ENCODE measurements at regions of chr14 and their contacts with region 1.

Region 1: DNA sequence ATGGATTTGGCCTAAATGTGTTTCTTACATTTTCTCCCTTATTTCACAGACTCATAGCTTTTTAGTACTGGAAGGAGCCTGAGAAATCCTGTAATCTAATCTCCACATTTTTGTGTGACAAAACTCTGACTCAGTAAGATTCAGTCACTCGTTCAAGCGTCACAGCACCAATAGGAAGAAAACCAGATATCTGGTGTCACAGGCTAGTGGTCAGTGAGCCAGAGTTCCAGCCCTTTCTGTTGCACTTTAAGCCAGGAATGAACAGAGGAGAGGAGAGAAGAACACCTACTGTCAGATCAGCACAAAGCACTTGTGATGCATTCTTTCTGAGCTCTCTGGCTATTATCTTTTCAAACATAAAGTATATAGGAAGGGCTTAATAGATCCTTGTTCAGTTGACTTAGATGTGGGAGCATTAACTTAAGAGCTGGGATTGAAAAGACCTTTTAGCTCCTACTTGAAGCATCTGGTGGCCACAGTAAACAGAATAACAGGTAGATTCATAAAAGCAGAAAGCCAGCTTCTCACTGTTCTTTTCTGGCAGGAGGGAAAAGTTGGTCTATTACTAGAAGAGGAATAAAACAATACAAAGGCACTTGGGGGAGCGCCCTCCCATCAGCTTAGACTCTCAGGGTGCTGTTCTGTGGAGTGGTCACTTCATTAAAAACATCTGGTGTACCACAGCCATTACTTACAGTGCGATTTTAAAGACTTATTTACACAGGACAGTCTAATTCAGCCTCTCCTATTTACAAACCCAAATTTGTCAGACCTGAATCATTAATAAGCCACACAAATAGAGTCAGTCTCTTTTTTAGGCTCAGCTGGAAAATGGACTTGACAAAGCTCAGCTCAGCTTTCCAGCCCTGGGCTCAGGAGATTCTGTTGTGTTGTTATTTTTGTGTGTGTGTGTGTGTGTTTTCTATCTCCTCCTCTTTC is 12.2 kb upstream of the NID2 start:
- DNase-seq: peak; percentile 96
- ATAC-seq: peak; percentile 70
- H3K4me3 ChIP-seq: peak overlapping the region; percentile 51
- H3K27ac ChIP-seq: peak overlapping the region; percentile 97
- H3K4me1 ChIP-seq: peaks cover 61% of the 10 kb centered on the region
- H3K27me3 ChIP-seq: no peaks in the 10 kb centered on the region
- CTCF ChIP-seq: no peak

Region 2: DNA sequence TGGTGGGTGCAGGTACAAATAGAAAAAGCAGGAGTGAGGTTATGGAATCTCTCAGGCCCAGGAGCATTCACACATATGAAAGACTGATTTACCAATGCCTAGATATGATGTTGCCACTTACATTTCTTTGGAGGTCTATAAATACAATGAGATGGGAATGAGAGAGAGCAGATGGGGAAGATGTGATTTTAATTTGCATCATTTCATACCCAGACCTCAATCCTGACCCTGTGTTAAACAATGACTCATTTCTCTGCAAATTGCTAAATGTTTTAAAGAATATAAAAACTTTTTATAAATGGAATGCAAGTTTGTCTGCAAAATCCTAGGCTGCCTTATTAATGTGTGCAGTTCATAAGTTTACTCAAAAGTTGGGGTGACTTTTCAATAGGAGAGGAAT is 259.3 kb before region 1 on chr14:
- CTCF ChIA-PET with region 1: no interaction called
- POLR2A ChIA-PET with region 1: no interaction called
- intact Hi-C with region 1: loop called (anchors 1 kb)
- DNase-seq: peak; percentile 9
- ATAC-seq: peak; percentile 55
- H3K4me3 ChIP-seq: no peak overlapping the region
- H3K27ac ChIP-seq: no peak overlapping the region
- H3K4me1 ChIP-seq: peaks cover 25% of the 10 kb centered on the region
- H3K27me3 ChIP-seq: no peaks in the 10 kb centered on the region
- CTCF ChIP-seq: no peak

Region 3: GRCh38 chr14:51922624-51923023 is 158.5 kb before region 1 on chr14:
- CTCF ChIA-PET with region 1: no interaction called
- POLR2A ChIA-PET with region 1: no interaction called
- intact Hi-C with region 1: no loop called
- DNase-seq: no peak
- ATAC-seq: no peak
- H3K4me3 ChIP-seq: no peak overlapping the region
- H3K27ac ChIP-seq: no peak overlapping the region
- H3K4me1 ChIP-seq: no peaks in the 10 kb centered on the region
- H3K27me3 ChIP-seq: no peaks in the 10 kb centered on the region
- CTCF ChIP-seq: no peak

Region 4: GRCh38 chr14:52043690-52044089 is 37.4 kb before region 1 on chr14:
- CTCF ChIA-PET with region 1: interaction called, 4 read pairs
- POLR2A ChIA-PET with region 1: interaction called, 4 read pairs
- intact Hi-C with region 1: loop called (anchors 1 kb)
- DNase-seq: peak; percentile 63
- ATAC-seq: peak; percentile 30; the same call in 1 of the 2 replicates
- H3K4me3 ChIP-seq: no peak overlapping the region
- H3K27ac ChIP-seq: no peak overlapping the region
- H3K4me1 ChIP-seq: peaks cover 24% of the 10 kb centered on the region
- H3K27me3 ChIP-seq: no peaks in the 10 kb centered on the region
- CTCF ChIP-seq: peak; percentile 76

Region 5: DNA sequence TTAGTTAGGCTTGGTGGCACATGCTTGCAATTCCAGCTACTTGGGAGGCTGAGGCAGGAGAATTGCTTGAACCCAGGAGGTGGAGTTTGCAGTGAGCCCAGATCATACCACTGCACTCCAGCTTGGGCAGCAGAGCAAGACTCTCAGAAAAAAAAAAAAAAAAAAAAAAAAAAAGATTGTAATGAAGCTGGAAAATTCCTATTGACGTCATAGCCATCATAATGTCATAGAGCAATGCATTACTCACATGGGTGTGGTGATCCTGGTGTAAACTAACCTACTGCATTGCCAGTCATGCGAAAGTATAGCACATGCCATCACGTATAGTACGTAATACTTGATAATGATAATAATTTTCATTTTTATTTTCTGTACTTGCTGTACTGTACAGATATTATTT is 30.5 kb after region 1 on chr14:
- CTCF ChIA-PET with region 1: no interaction called
- POLR2A ChIA-PET with region 1: no interaction called
- intact Hi-C with region 1: loop called (anchors 1 kb)
- DNase-seq: peak; percentile 62
- ATAC-seq: peak; percentile 12
- H3K4me3 ChIP-seq: no peak overlapping the region
- H3K27ac ChIP-seq: peak overlapping the region; percentile 93
- H3K4me1 ChIP-seq: peaks cover 25% of the 10 kb centered on the region
- H3K27me3 ChIP-seq: no peaks in the 10 kb centered on the region
- CTCF ChIP-seq: no peak

Region 6: GRCh38 chr14:52272375-52272774 is 191.3 kb after region 1 on chr14:
- CTCF ChIA-PET with region 1: no interaction called
- POLR2A ChIA-PET with region 1: no interaction called
- intact Hi-C with region 1: no loop called
- DNase-seq: peak; percentile 80
- ATAC-seq: peak; percentile 85
- H3K4me3 ChIP-seq: no peak overlapping the region
- H3K27ac ChIP-seq: no peak overlapping the region
- H3K4me1 ChIP-seq: no peaks in the 10 kb centered on the region; the same call in 1 of the 2 replicates
- H3K27me3 ChIP-seq: peaks cover 23% of the 10 kb centered on the region
- CTCF ChIP-seq: peak; percentile 75

Measured in PC-3 (cell line).